Endothelial cell of umbilical vein (primary cell): ENCODE measurements at regions of chr7 and their contacts with region 1.

Region 1: GRCh38 chr7:116180302-116180701 is 30.0 kb upstream of the TES start:
- DNase-seq: peak; percentile 70
- H3K4me3 ChIP-seq: no peak overlapping the region
- H3K27ac ChIP-seq: no peak overlapping the region
- H3K4me1 ChIP-seq: no peaks in the 10 kb centered on the region
- H3K27me3 ChIP-seq: no peaks in the 10 kb centered on the region
- CTCF ChIP-seq: peak; percentile 53 to 63
- POLR2A ChIP-seq: no peak

Region 2: GRCh38 chr7:116167177-116167576 is 13.1 kb before region 1 on chr7:
- CTCF ChIA-PET with region 1: interaction called, 23 read pairs
- POLR2A ChIA-PET with region 1: no interaction called
- dilution Hi-C with region 1: no loop called
- intact Hi-C with region 1: no loop called
- DNase-seq: no peak
- H3K4me3 ChIP-seq: no peak overlapping the region
- H3K27ac ChIP-seq: no peak overlapping the region
- H3K4me1 ChIP-seq: no peaks in the 10 kb centered on the region
- H3K27me3 ChIP-seq: no peaks in the 10 kb centered on the region
- CTCF ChIP-seq: peak in 1 of 2 donors; percentile 8
- POLR2A ChIP-seq: no peak

Region 3: DNA sequence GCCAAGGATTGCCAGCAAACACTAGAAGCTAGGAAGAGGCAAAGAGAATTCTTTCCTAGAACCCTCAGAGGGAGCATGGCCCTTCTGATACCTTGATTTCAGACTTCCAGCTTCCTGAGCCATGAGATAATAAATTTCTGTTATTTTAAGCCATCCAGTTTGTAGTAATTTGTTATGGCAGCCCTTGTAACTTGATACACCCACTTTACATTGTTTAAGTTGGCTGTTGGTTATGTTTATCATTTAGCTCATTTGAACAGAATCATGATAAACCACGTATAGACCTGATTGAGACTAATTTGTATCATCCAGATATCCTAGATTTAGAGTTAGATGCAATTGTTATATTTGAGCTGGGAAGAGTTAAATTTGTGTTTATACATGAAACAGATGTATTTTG is 20.7 kb after region 1 on chr7:
- CTCF ChIA-PET with region 1: interaction called, 17 read pairs
- POLR2A ChIA-PET with region 1: no interaction called
- dilution Hi-C with region 1: no loop called
- intact Hi-C with region 1: no loop called
- DNase-seq: peak; percentile 41
- H3K4me3 ChIP-seq: no peak overlapping the region
- H3K27ac ChIP-seq: no peak overlapping the region
- H3K4me1 ChIP-seq: no peaks in the 10 kb centered on the region
- H3K27me3 ChIP-seq: no peaks in the 10 kb centered on the region
- CTCF ChIP-seq: no peak
- POLR2A ChIP-seq: no peak

Region 4: GRCh38 chr7:116218051-116218645 is 37.8 kb after region 1 on chr7:
- CTCF ChIA-PET with region 1: interaction called, 55 read pairs
- POLR2A ChIA-PET with region 1: no interaction called
- dilution Hi-C with region 1: no loop called
- intact Hi-C with region 1: no loop called
- DNase-seq: peak; percentile 97
- H3K4me3 ChIP-seq: peak overlapping the region in 1 of 3 experiments; percentile 28
- H3K27ac ChIP-seq: peak overlapping the region; percentile 96
- H3K4me1 ChIP-seq: peaks cover 56% of the 10 kb centered on the region
- H3K27me3 ChIP-seq: no peaks in the 10 kb centered on the region
- CTCF ChIP-seq: no peak
- POLR2A ChIP-seq: no peak

Region 5: DNA sequence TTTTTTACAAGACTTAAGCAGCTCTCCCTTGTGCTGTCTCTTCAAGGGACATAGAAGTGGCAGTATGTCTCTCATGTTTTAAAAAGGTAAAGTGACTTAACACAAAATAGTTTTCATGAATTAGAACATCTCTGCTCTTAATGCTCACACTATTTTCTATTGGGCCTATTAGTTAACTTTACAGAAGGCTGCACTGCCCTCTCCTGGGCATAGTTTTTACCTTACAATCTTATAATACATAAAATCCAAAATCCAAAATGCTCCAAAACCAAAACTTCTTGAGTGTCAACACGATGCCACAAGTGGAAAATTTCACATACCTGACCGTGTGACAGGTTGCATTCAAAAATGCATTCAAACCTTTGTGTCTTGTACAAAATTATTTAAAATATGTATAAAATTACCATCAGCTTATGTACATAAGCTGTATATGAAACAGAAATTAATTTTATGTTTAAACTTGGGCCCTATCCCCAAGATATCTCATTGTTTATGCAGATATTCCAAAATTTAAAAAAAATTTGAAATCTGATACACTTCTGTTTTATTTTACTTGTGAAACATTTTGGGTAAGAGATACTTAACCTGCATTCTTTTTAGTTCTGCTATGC is 55.8 kb after region 1 on chr7:
- CTCF ChIA-PET with region 1: interaction called, 462 read pairs
- POLR2A ChIA-PET with region 1: interaction called, 7 read pairs
- dilution Hi-C with region 1: no loop called
- intact Hi-C with region 1: loop called (anchors 1 kb)
- DNase-seq: peak; percentile 74
- H3K4me3 ChIP-seq: no peak overlapping the region
- H3K27ac ChIP-seq: no peak overlapping the region
- H3K4me1 ChIP-seq: peaks cover 11% of the 10 kb centered on the region
- H3K27me3 ChIP-seq: no peaks in the 10 kb centered on the region
- CTCF ChIP-seq: peak; percentile 22 to 24
- POLR2A ChIP-seq: no peak

Region 6: DNA sequence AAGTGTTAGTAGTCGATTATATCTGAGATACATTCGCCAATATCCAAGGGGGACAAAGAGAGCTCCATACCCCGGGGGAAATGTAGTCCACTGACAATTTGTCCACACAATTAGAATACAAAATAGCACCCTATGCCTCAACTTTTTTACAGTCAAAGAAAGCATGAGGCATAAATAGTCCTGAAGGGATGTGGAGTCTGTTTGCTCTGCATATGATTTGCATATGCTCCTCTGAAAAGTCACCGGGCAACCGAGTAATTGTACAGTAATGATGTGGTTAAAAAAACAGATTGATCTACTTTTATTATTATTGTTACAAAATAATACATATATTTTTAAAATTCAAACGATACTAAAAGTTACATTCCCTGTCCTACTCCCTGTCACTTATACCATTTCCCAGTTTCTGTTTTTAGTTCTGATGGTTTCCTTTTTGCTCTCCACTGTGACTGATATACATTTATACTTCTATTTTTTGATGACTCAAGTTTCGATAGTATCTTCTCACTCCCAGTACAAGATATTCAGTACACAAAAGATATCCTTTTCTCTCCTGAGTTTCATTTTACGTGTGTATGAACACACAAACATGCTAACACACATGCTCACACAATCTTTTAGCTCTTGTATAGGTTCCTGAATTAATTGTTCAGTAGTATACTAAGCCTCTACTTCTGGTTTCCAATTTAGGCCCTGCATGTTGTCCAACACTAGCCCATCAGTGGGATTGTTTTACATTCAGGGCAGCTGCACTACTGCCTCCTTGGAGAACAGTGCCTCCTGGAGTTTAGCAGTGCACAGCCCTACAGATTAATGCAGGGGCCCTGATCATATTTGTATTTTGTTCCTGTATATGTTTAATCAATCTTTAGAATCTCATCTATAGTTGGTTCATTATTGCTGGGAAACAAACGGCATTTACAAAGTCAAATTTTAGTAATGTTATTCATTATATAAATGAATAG is 160.9 kb after region 1 on chr7:
- CTCF ChIA-PET with region 1: interaction called, 3 read pairs
- POLR2A ChIA-PET with region 1: no interaction called
- dilution Hi-C with region 1: no loop called
- intact Hi-C with region 1: loop called (anchors 5 kb)
- DNase-seq: peak; percentile 72
- H3K4me3 ChIP-seq: peak overlapping the region in 1 of 3 experiments; percentile 31
- H3K27ac ChIP-seq: peak overlapping the region; percentile 87
- H3K4me1 ChIP-seq: peaks cover 49% of the 10 kb centered on the region
- H3K27me3 ChIP-seq: no peaks in the 10 kb centered on the region
- CTCF ChIP-seq: peak; percentile 45 to 48
- POLR2A ChIP-seq: no peak

Region 7: GRCh38 chr7:116809636-116810266 is 629.4 kb after region 1 on chr7:
- CTCF ChIA-PET with region 1: interaction called, 6 read pairs
- POLR2A ChIA-PET with region 1: no interaction called
- dilution Hi-C with region 1: no loop called
- intact Hi-C with region 1: loop called (anchors 1 kb)
- DNase-seq: peak; percentile 86
- H3K4me3 ChIP-seq: no peak overlapping the region
- H3K27ac ChIP-seq: no peak overlapping the region
- H3K4me1 ChIP-seq: peaks cover 19% of the 10 kb centered on the region
- H3K27me3 ChIP-seq: no peaks in the 10 kb centered on the region
- CTCF ChIP-seq: peak; percentile 25 to 43
- POLR2A ChIP-seq: no peak